ENCODE measurements at regions of chr6 and their contacts with region 1.

Region 1: GRCh38 chr6:129730477-129731165 is 20.6 kb upstream of the ARHGAP18 start:
- DNase-seq: no peak
- ATAC-seq: no peak
- H3K4me3 Mint-ChIP-seq: no peak overlapping the region
- H3K27ac Mint-ChIP-seq: peak overlapping the region; percentile 84
- H3K4me1 Mint-ChIP-seq: peaks cover 31% of the 10 kb centered on the region
- H3K27me3 Mint-ChIP-seq: no peaks in the 10 kb centered on the region
- CTCF ChIP-seq: no peak

Region 2: DNA sequence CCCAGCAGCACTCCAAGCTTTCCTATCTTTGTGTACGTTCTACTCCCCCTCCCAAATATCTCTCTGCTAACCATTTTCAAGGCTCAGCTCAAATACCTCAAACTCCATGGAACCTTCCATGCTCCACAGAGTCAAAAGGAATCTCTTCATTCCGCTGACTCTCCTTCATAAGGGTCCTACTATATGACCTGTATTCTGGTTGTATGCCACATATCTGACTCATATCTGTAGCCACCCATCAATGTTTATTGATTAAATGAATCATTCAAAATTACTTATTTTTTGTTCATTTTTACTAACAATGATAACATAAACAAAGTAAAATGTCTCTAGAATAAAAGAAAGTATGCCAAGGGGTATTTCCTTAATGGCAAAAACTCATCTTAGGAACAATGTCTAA is 143.8 kb before region 1 on chr6:
- CTCF ChIA-PET with region 1: no interaction called
- POLR2A ChIA-PET with region 1: no interaction called
- DNase-seq: no peak
- ATAC-seq: no peak
- H3K4me3 Mint-ChIP-seq: no peak overlapping the region
- H3K27ac Mint-ChIP-seq: no peak overlapping the region
- H3K4me1 Mint-ChIP-seq: no peaks in the 10 kb centered on the region
- H3K27me3 Mint-ChIP-seq: no peaks in the 10 kb centered on the region
- CTCF ChIP-seq: no peak

Region 3: GRCh38 chr6:129598244-129599187 is 132.1 kb before region 1 on chr6:
- CTCF ChIA-PET with region 1: interaction called, 32 read pairs
- POLR2A ChIA-PET with region 1: no interaction called
- DNase-seq: no peak
- ATAC-seq: peak; percentile 72
- H3K4me3 Mint-ChIP-seq: no peak overlapping the region
- H3K27ac Mint-ChIP-seq: no peak overlapping the region
- H3K4me1 Mint-ChIP-seq: peaks cover 7% of the 10 kb centered on the region; the same call in 1 of the 2 replicates
- H3K27me3 Mint-ChIP-seq: no peaks in the 10 kb centered on the region
- CTCF ChIP-seq: peak; percentile 53; the same call in 1 of the 2 replicates

Region 4: GRCh38 chr6:129709769-129710449 is 20.7 kb before region 1 on chr6 and contains the start of gene ARHGAP18:
- CTCF ChIA-PET with region 1: interaction called, 15 read pairs
- POLR2A ChIA-PET with region 1: no interaction called
- DNase-seq: peak; percentile 86
- ATAC-seq: peak; percentile 98
- H3K4me3 Mint-ChIP-seq: peak within 1 kb of the TSS; percentile 93
- H3K27ac Mint-ChIP-seq: peak within 1 kb of the TSS; percentile 97
- H3K4me1 Mint-ChIP-seq: peaks cover 40% of the 10 kb centered on the region
- H3K27me3 Mint-ChIP-seq: no peaks in the 10 kb centered on the region; the same call in 1 of the 2 replicates
- CTCF ChIP-seq: no peak
- total RNA-seq, gene ARHGAP18: 3.7 to 4.6 TPM (median 4.4 TPM) in 3 replicates

Region 5: DNA sequence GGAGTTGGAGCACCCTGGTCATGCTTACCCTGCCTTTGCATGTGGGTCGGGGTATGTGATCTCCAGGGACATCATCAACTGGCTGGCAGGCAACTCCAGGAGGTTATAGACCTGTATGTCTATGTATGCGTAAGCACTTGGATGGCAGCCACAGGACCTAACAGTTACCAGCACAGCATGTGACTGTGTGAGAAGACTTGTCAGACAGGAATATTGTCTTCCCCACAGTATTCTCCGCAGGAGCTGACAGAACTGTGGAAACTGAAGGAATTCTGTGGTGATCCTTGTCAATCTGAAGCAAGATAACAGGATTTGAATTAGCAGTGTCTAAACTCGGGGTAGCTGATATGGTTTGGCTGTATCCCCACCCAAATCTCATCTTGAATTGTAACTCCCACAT is 71.3 kb after region 1 on chr6:
- CTCF ChIA-PET with region 1: no interaction called
- POLR2A ChIA-PET with region 1: no interaction called
- DNase-seq: no peak
- ATAC-seq: no peak
- H3K4me3 Mint-ChIP-seq: no peak overlapping the region
- H3K27ac Mint-ChIP-seq: no peak overlapping the region
- H3K4me1 Mint-ChIP-seq: no peaks in the 10 kb centered on the region
- H3K27me3 Mint-ChIP-seq: no peaks in the 10 kb centered on the region
- CTCF ChIP-seq: no peak

Region 6: GRCh38 chr6:129882510-129883023 is 151.9 kb after region 1 on chr6:
- CTCF ChIA-PET with region 1: no interaction called
- POLR2A ChIA-PET with region 1: no interaction called
- DNase-seq: no peak
- ATAC-seq: no peak
- H3K4me3 Mint-ChIP-seq: no peak overlapping the region
- H3K27ac Mint-ChIP-seq: no peak overlapping the region
- H3K4me1 Mint-ChIP-seq: no peaks in the 10 kb centered on the region
- H3K27me3 Mint-ChIP-seq: no peaks in the 10 kb centered on the region; the same call in 1 of the 2 replicates
- CTCF ChIP-seq: no peak

Region 7: DNA sequence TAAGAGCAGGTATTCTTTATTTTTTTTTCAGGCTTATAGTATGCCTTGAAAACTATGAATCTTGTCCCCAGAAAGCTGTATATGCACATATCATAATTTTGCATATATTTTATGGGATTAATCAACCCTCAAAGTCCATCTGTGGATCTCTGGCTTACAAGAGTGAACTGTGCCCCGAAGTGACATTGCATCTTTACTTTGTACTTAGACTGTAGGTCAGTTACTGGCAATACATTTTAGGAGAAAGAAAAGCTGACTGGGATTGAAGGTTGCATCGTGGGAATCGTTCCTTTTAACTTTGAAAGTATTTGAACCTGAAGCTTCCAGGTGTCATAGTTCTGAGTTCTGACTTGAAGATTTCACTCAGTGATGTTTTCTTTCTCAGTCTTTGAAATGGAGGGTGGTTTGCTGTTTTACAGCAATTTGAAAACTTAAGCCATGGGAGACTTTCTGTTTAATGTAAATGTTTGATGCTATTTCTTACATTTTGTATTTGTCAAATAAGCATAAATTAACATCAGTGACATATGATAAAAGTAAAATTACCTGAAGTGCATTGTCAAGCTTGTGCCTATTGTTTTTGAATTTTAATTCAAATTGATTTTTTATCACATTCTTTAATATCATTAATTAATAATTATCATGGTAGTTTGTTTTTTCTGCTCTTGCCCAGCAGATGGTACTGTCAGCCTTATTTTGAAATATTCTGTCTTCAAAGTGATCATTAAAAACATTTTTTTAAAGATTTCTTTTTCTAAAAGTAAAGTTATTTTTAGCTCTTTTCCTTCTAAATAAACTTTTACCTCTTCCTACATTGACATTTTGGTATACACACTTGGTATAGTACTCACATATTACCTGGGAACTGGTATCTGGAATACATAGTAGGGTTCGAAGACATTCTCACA is 316.7 kb after region 1 on chr6:
- CTCF ChIA-PET with region 1: no interaction called
- POLR2A ChIA-PET with region 1: no interaction called
- DNase-seq: no peak
- ATAC-seq: no peak
- H3K4me3 Mint-ChIP-seq: no peak overlapping the region
- H3K27ac Mint-ChIP-seq: 0 out of 2 replicates have a peak overlapping the region, but pooled peaks have one; percentile 13
- H3K4me1 Mint-ChIP-seq: peaks cover 20% of the 10 kb centered on the region
- H3K27me3 Mint-ChIP-seq: no peaks in the 10 kb centered on the region
- CTCF ChIP-seq: no peak

Measured in WTC11 (cell line).